OCI-LY7 (cell line): ENCODE measurements at regions of chr20 and their contacts with region 1.

Region 1: GRCh38 chr20:4108495-4109306 is 93.3 kb upstream of the RNF24 start:
- DNase-seq: peak; percentile 83
- H3K4me3 ChIP-seq: no peak overlapping the region
- H3K27ac ChIP-seq: no peak overlapping the region
- H3K4me1 ChIP-seq: peaks cover 4% of the 10 kb centered on the region
- CTCF ChIP-seq: peak; percentile 94

Region 2: GRCh38 chr20:4592316-4593148 is 483.8 kb after region 1 on chr20:
- CTCF ChIA-PET with region 1: no interaction called
- POLR2A ChIA-PET with region 1: no interaction called
- intact Hi-C with region 1: loop called (anchors 1 kb)
- DNase-seq: no peak
- H3K4me3 ChIP-seq: no peak overlapping the region
- H3K27ac ChIP-seq: no peak overlapping the region
- H3K4me1 ChIP-seq: no peaks in the 10 kb centered on the region
- CTCF ChIP-seq: peak; percentile 83